Activated CD8-positive, alpha-beta memory T cell treated with anti-CD3 and anti-CD28 coated beads, Interleukin-2, amount 10 ng/mL, durations not matched to agents 7 days and 5 days (primary cell): ENCODE measurements at regions of chr12 and their contacts with region 1.

Region 1: GRCh38 chr12:103548622-103549601 is 38.2 kb upstream of the STAB2 start:
- DNase-seq: peak; percentile 83
- ATAC-seq: peak; percentile 84
- H3K4me3 Mint-ChIP-seq: no peak overlapping the region
- H3K27ac Mint-ChIP-seq: peak overlapping the region; percentile 60
- H3K4me1 Mint-ChIP-seq: peaks cover 13% of the 10 kb centered on the region
- H3K27me3 Mint-ChIP-seq: peaks cover 26% of the 10 kb centered on the region

Region 2: DNA sequence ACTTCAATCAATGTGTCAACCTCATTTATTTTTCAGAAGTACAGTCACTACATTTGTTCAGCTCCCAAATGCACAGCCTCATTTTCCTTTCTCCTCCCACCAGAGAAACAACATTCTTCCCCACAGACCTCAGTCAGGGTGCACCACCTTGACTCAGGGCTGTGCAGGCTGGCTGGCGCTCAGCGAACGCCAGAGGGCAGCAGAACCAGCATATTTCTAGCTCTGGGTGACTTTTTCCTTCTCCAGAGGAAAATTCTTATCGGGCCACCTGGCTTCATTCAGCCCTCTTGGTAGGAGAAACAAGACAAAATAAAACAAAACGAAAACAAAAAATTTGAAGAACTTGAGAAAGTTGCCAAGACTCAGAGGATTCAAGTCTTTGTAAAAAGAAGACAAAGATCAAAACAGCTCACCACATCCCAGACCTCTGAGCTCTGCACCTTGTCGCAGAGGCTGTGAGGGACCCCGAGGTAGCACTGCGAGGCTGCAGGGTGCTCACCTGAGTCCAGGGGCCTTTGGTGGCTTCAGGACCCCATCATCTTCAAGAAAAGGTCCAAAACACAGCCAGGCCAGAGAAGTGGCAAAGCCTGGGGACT is 665.6 kb before region 1 on chr12:
- CTCF ChIA-PET with region 1: interaction called, 18 read pairs
- DNase-seq: peak; percentile 46
- ATAC-seq: no peak
- H3K4me3 Mint-ChIP-seq: no peak overlapping the region
- H3K27ac Mint-ChIP-seq: no peak overlapping the region
- H3K4me1 Mint-ChIP-seq: peaks cover 5% of the 10 kb centered on the region
- H3K27me3 Mint-ChIP-seq: peaks cover 11% of the 10 kb centered on the region

Region 3: DNA sequence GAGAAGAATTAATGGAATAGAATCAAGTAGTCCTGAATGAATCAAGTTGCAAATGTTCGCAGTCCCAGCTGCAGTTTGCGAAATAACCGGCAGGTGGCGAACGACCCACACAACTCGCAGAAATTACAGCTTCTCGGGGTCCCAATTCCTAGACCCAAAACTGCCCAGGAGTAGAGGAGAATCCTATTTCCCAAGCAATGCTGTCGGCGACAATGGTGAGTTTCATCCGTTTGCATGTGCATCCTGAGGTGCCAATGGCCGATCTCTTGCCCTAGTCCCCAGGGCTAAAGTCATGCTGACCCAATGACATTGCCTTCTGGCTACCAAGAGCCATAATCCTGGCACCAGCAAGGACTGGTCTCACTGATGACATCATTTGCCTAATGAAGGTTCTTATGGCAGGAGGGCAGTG is 600.0 kb before region 1 on chr12:
- CTCF ChIA-PET with region 1: interaction called, 60 read pairs
- DNase-seq: peak; percentile 56
- ATAC-seq: no peak
- H3K4me3 Mint-ChIP-seq: no peak overlapping the region
- H3K27ac Mint-ChIP-seq: no peak overlapping the region
- H3K4me1 Mint-ChIP-seq: peaks cover 8% of the 10 kb centered on the region
- H3K27me3 Mint-ChIP-seq: peaks cover 63% of the 10 kb centered on the region

Region 4: GRCh38 chr12:103495479-103496456 is 53.1 kb before region 1 on chr12 and contains the start of gene C12orf42:
- CTCF ChIA-PET with region 1: interaction called, 33 read pairs
- DNase-seq: peak; percentile 53
- ATAC-seq: peak; percentile 76
- H3K4me3 Mint-ChIP-seq: peak within 1 kb of the TSS; percentile 38
- H3K27ac Mint-ChIP-seq: no peak within 1 kb of the TSS
- H3K4me1 Mint-ChIP-seq: peaks cover 13% of the 10 kb centered on the region
- H3K27me3 Mint-ChIP-seq: peaks cover 43% of the 10 kb centered on the region
- total RNA-seq, gene C12orf42: 0.84 TPM in 1 of 2 experiments, not detected in the other

Region 5: DNA sequence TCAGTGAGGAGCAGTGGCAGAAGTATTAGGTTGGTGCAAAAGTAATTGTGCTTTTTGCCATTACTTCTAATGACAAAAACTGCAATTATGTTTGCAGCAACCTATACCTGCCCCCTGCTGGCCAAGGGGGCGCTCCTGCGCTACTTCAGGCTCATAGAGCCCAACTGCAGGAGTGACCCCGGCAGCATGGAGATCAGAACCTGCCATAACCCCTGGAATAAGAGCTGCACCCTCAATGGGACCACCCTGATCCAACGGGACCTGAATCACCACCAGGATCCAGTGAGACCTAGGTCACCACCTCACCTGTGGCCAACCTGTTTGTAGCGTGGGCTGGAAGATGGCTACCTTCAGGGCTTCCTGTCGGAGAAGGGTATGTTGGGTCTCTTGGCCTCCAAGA is 44.9 kb before region 1 on chr12:
- CTCF ChIA-PET with region 1: interaction called, 33 read pairs
- DNase-seq: peak; percentile 55
- ATAC-seq: no peak
- H3K4me3 Mint-ChIP-seq: no peak overlapping the region
- H3K27ac Mint-ChIP-seq: no peak overlapping the region
- H3K4me1 Mint-ChIP-seq: peaks cover 24% of the 10 kb centered on the region
- H3K27me3 Mint-ChIP-seq: peaks cover 37% of the 10 kb centered on the region